ENCODE measurements at regions of chr1 and their contacts with region 1.

Region 1: GRCh38 chr1:37883671-37884070 is 24.3 kb upstream of the MTF1 start:
- DNase-seq: no peak
- H3K4me3 ChIP-seq: no peak overlapping the region
- H3K4me3 Mint-ChIP-seq: no peak overlapping the region
- H3K27ac ChIP-seq: no peak overlapping the region
- H3K27ac Mint-ChIP-seq: peak overlapping the region in 3 of 7 donors; percentile 25 to 38 (median 31)
- H3K4me1 ChIP-seq: no peaks in the 10 kb centered on the region
- H3K4me1 Mint-ChIP-seq: no peaks in the 10 kb centered on the region
- H3K27me3 ChIP-seq: no peaks in the 10 kb centered on the region
- H3K27me3 Mint-ChIP-seq: no peaks in the 10 kb centered on the region
- CTCF ChIP-seq: no peak

Region 2: GRCh38 chr1:37865348-37866120 is 18.1 kb before region 1 on chr1:
- intact Hi-C with region 1: no loop called
- DNase-seq: peak in 1 of 3 donors; percentile 34
- H3K4me3 ChIP-seq: no peak overlapping the region
- H3K4me3 Mint-ChIP-seq: no peak overlapping the region
- H3K27ac ChIP-seq: no peak overlapping the region
- H3K27ac Mint-ChIP-seq: no peak overlapping the region
- H3K4me1 ChIP-seq: peaks cover 0 to under 1% of the 10 kb centered on the region in 2 donors
- H3K4me1 Mint-ChIP-seq: no peaks in the 10 kb centered on the region
- H3K27me3 ChIP-seq: no peaks in the 10 kb centered on the region
- H3K27me3 Mint-ChIP-seq: no peaks in the 10 kb centered on the region
- CTCF ChIP-seq: no peak

Region 3: DNA sequence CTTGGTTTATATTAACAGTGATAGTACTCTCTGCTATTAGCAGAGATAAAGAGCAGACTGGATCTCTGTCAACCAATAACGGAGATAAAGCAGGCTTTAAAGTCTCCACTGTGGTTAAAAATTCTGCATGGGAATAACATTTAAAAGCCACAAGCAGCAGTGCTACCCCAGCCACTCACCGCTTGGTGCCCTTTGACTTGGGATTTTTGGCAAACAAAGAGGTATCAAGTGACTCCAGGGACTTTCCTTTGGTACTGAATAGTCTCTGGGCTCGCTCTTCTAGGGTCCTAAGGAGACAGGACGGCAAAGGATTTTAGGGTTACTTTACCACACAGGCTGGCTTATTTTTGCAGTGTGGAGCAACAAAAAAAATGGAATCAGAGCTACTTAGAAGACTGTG is 94.9 kb after region 1 on chr1:
- intact Hi-C with region 1: loop called in 1 of 2 experiments (anchors 10 kb)
- DNase-seq: no peak
- H3K4me3 ChIP-seq: no peak overlapping the region
- H3K4me3 Mint-ChIP-seq: no peak overlapping the region
- H3K27ac ChIP-seq: no peak overlapping the region
- H3K27ac Mint-ChIP-seq: no peak overlapping the region
- H3K4me1 ChIP-seq: no peaks in the 10 kb centered on the region
- H3K4me1 Mint-ChIP-seq: no peaks in the 10 kb centered on the region
- H3K27me3 ChIP-seq: no peaks in the 10 kb centered on the region
- H3K27me3 Mint-ChIP-seq: no peaks in the 10 kb centered on the region
- CTCF ChIP-seq: no peak

Measured in CD14-positive monocyte (primary cell).